Dorsolateral prefrontal cortex (tissue), 120 donors: ENCODE measurements at regions of chr10 and their contacts with region 1.

Region 1: GRCh38 chr10:57338823-57339558 is 928.7 kb downstream of the IPMK start:
- DNase-seq: no peak
- H3K4me3 ChIP-seq: no peak overlapping the region
- H3K27ac ChIP-seq: no peak overlapping the region
- H3K27me3 ChIP-seq: no peaks in the 10 kb centered on the region
- CTCF ChIP-seq: peak; percentile 52 to 86 (median 78)

Region 2: DNA sequence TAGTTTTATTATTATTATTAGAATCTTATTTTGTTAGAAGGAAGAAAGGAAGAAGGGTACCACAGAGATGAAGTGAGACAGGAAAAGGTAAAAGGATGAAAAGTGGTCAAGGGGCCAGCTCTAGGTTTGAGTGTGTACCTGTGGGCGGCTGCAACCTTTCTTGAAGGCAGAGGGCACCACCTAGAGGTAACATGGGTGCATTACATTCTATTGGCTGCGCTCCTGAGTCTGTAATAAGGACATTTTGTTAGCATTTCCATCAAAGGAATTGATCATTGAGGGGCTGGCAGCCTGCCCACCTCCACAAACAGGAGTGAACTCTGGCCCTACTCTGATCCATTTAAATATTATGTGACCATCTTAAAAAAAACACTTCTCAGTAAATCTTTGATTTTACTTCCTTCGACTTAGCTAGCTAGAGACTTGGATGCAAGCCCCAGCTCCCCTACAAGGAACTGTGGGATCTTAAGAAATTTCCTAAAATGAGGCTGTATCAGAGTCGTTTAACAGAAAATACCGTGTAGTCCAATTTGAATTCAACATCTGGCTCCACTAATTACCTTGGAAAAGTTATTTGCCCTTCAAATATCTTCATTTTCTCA is 318.3 kb after region 1 on chr10:
- intact Hi-C with region 1: loop called (anchors 5 to 10 kb)
- DNase-seq: peak; percentile 4 to 57 (median 45)
- H3K4me3 ChIP-seq: no peak overlapping the region
- H3K27ac ChIP-seq: no peak overlapping the region
- H3K27me3 ChIP-seq: peaks cover 0 to 5% (median 0%) of the 10 kb centered on the region in 45 donors
- CTCF ChIP-seq: peak; percentile 28 to 87 (median 76)

Region 3: DNA sequence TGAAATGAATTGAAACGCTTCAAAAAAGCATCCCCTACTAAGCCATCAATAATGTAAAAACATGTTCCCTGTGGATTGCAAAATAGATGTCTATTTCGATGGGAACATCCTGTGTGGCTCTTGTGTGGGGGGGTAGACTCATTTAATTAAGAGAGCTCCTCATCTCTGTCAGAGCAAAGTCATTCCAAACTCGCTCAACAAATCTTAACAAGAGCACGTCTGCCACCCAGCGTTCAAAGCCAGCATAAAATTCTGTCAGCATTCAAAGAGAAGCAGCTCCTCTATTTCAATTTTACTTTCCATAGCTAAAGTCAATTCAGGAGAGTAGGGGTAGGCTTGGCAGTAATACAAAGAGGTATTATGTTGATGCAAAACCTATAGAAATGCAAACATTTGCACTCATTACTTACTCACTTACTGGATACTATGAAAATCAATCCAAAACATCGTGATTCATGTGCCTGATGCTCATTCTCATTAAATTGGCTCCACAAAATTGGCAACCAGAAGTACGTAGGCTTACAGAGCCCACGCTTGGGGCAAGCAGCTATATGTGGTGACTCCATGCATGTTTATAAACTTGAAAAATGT is 813.8 kb after region 1 on chr10:
- intact Hi-C with region 1: loop called in 1 of 2 experiments (anchors 5 kb)
- DNase-seq: peak in 9 of 10 donors; percentile 27 to 80 (median 65)
- H3K4me3 ChIP-seq: peak overlapping the region in 1 of 59 donors; percentile 3
- H3K27ac ChIP-seq: no peak overlapping the region
- H3K27me3 ChIP-seq: peaks cover 0 to 7% (median 0%) of the 10 kb centered on the region in 45 donors
- CTCF ChIP-seq: peak; percentile 49 to 80 (median 66)